Pancreas (tissue), 10 donors: ENCODE measurements at regions of chr16 and their contacts with region 1.

Region 1: DNA sequence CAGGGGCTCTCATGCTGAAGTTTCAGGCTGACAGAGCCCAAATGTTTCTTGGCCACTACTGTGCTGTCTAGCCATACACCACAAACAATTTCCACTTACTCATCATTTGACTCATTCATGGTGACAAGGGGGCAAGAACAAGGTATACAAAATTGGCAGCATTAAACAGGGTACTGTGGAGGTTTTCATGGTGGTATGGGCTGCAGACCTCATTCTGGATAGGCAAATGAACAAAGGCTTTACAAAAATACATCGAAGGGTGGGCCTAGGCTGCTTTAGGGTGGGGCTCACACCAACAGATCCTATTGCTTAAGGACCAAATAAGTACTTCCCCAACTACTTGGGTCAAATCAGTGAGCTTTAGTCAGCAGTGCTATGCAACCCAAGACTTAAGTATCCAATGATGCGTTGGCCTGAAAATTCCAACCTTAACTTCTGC is 53.0 kb downstream of the N4BP1 start:
- DNase-seq: no peak
- ATAC-seq: peak in 2 of 4 donors; percentile 31 to 38
- H3K4me3 ChIP-seq: no peak overlapping the region
- H3K27ac ChIP-seq: no peak overlapping the region
- H3K4me1 ChIP-seq: peaks cover 0 to 37% (median 26%) of the 10 kb centered on the region in 3 donors
- H3K27me3 ChIP-seq: no peaks in the 10 kb centered on the region
- CTCF ChIP-seq: no peak

Region 2: DNA sequence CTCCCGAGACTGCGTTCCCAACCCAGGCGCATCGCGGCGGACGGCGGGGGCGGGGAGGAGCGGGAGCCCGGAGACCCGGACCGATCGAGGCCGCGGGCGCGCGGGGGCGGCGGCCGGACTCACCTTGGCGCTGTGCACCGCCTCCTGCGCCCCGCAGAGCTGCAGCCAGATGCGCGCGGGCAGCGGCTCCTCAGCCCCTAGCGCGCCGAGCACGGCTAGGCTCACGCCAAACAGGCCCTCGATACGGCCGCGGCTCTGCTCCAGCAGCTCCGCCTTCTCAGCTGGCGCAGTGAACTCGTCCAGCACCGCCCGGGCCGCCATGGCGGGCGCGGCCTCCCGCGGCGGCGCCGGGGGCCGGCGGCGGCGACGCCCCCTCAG is 52.7 kb after region 1 on chr16:
- intact Hi-C with region 1: loop called in 1 of 3 experiments (anchors 10 kb)
- DNase-seq: peak in 5 of 6 donors; percentile 66 to 91 (median 77)
- ATAC-seq: peak; percentile 52 to 76 (median 64)
- H3K4me3 ChIP-seq: peak overlapping the region; percentile 77 to 93 (median 91)
- H3K27ac ChIP-seq: peak overlapping the region; percentile 57 to 94 (median 86)
- H3K4me1 ChIP-seq: peaks cover 17 to 23% (median 18%) of the 10 kb centered on the region in 3 donors
- H3K27me3 ChIP-seq: no peaks in the 10 kb centered on the region
- CTCF ChIP-seq: no peak